ENCODE measurements at regions of chr3 and their contacts with region 1.

Region 1: GRCh38 chr3:34155666-34156065 is 357.2 kb downstream of the PDCD6IP start:
- DNase-seq: no peak
- ATAC-seq: no peak
- H3K4me3 ChIP-seq: no peak overlapping the region
- H3K27ac ChIP-seq: no peak overlapping the region
- H3K4me1 ChIP-seq: no peaks in the 10 kb centered on the region
- H3K27me3 ChIP-seq: no peaks in the 10 kb centered on the region
- CTCF ChIP-seq: no peak

Region 2: GRCh38 chr3:34312684-34313083 is 157.0 kb after region 1 on chr3:
- CTCF ChIA-PET with region 1: no interaction called
- POLR2A ChIA-PET with region 1: interaction called, 18 read pairs
- in situ Hi-C with region 1: no loop called
- intact Hi-C with region 1: no loop called
- DNase-seq: no peak
- ATAC-seq: no peak
- H3K4me3 ChIP-seq: no peak overlapping the region
- H3K27ac ChIP-seq: no peak overlapping the region
- H3K4me1 ChIP-seq: no peaks in the 10 kb centered on the region
- H3K27me3 ChIP-seq: no peaks in the 10 kb centered on the region
- CTCF ChIP-seq: no peak

Region 3: GRCh38 chr3:35254917-35255316 is 1099.3 kb after region 1 on chr3:
- CTCF ChIA-PET with region 1: no interaction called
- POLR2A ChIA-PET with region 1: no interaction called
- in situ Hi-C with region 1: no loop called
- intact Hi-C with region 1: no loop called
- DNase-seq: no peak
- ATAC-seq: no peak
- H3K4me3 ChIP-seq: no peak overlapping the region
- H3K27ac ChIP-seq: no peak overlapping the region
- H3K4me1 ChIP-seq: no peaks in the 10 kb centered on the region
- H3K27me3 ChIP-seq: no peaks in the 10 kb centered on the region
- CTCF ChIP-seq: no peak

Measured in Panc1 (cell line).